Activated T-helper 2 cell treated with anti-CD3 and anti-CD28 coated beads, Interferon-gamma antibody, Interleukin-2, Interleukin-4, amounts not matched to agents 10 μg/mL and 5 μg/mL and 100 μg/mL, durations not matched to agents 14 hours and 24 hours and 36 hours (primary cell): ENCODE measurements at regions of chr9 and their contacts with region 1.

Region 1: DNA sequence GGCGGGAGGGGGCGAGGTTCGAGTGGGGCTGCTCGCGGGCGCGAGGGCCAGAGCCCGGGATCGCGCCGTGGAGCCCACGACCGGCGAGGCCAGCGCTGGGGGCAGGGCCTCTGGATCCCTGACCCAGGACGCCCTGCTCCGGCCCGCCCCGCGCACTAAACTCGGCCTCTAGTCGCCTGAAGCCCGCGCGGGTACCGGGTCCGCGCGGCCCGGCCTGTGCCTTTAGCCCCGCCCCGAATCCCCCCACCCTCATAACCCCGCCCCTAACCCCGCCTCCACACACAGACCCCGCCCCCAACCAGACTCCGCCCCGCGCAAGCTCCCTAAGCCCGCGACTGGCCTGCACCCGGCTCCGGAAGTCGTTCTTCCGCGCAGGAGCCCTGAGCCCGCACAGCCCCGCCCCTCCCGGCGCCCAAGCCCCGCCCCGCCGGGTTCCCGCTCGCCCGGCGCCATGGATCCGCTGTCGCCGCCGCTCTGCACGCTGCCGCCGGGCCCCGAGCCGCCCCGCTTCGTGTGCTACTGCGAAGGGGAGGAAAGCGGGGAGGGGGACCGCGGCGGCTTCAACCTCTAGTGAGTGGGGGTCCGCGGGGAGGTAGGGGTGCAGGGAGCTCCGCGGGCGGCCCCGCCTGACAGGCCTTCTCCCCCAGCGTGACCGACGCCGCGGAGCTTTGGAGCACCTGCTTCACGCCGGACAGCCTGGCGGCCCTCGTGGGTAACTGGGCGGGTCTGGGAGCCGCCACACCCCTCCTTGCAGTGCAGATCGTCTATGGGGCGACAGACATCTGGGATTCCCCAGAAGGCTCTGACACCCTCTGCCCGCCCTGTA is at the start of gene PAXX:
- DNase-seq: peak; percentile 93
- H3K4me3 Mint-ChIP-seq: peak within 1 kb of the TSS; percentile 83
- H3K27ac Mint-ChIP-seq: peak within 1 kb of the TSS; percentile 77
- H3K4me1 Mint-ChIP-seq: peaks cover 10% of the 10 kb centered on the region
- H3K27me3 Mint-ChIP-seq: peaks cover 17% of the 10 kb centered on the region
- total RNA-seq, gene PAXX: 60.5 and 72.6 TPM in 2 replicates

Region 2: DNA sequence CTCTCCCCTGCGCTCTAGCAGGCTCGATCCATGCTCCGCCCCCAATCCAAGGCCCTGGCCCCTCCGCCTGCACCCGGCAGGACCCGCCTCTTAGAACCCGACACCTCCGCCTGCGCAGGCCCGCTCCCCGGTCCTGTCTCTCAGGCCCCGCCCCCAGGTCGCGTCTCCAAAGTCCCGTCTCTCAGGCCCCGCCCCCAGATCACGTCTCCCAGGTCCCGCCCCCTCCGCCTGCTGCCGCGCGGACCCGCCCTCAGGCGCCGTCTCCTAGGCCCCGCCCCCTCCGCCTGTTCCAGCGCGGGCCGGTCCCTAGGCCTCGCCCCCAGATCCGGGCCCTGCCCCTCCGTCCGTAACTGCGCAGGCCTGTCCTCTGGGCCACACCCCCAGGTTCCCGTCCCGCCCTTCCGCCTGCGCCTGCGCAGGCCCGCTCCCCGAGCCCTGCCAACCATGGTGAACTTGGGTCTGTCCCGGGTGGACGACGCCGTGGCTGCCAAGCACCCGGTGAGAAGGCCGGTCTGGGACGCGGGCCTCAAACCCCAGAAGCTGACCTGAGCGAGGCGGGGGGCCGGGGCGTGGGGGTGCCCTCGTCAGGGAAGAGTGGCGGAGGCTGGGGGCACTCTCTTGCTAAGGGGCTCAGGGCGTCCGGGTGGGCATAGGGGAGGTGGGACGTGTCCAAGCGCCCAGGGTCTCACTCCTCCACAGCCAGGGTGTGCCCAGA is 201.1 kb before region 1 on chr9 and contains the start of gene TMEM141:
- intact Hi-C with region 1: loop called (anchors 1 kb)
- DNase-seq: peak; percentile 100
- H3K4me3 Mint-ChIP-seq: peak within 1 kb of the TSS; percentile 80
- H3K27ac Mint-ChIP-seq: peak within 1 kb of the TSS; percentile 80
- H3K4me1 Mint-ChIP-seq: peaks cover 23% of the 10 kb centered on the region
- H3K27me3 Mint-ChIP-seq: peaks cover 6% of the 10 kb centered on the region
- total RNA-seq, gene TMEM141: 34.4 and 34.7 TPM in 2 replicates

Region 3: DNA sequence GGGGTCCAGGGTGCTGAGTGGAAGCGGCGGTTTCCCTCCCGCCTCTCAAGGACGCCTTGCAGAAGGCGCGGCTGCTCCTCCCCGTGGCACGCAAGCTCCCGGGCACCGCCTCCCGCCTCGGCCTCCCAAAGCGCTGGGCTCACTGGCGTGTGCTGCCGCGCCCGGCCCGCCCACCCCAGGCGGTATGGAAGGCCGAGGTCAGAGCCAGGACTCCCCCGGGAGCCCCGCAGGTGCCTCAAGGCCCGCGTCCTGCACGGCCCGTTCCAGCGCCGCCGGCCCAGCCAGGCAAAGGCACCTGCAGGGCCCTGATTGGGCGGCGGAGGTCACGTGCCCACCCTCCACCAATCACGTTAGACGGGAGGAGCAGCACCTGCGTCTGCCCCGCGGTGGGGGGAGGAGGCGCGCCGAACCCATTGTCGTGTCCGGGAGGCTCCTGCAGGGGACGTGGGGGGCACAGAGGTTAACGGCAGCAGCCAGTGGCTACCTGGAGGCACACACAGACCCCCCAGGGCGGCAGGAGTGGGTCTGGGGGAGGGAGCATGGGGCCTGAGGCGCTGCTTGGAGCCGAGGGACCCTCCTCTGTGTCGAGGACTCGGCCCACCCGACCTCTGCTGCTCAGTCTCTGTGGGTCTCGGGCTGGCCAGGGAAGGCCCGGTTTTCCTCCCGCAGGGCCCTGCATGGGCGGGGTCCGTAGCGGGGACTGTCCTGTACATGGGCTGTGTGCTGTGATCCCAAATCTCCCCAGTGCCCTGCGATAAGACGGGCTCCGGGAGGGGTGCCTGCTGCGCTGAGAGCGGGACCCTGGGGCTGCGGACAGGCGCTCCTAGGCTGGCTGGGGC is 42.2 kb before region 1 on chr9:
- intact Hi-C with region 1: loop called (anchors 2 kb)
- DNase-seq: peak; percentile 94
- H3K4me3 Mint-ChIP-seq: peak overlapping the region; percentile 81
- H3K27ac Mint-ChIP-seq: peak overlapping the region; percentile 87
- H3K4me1 Mint-ChIP-seq: no peaks in the 10 kb centered on the region
- H3K27me3 Mint-ChIP-seq: no peaks in the 10 kb centered on the region

Region 4: GRCh38 chr9:137029058-137029936 is 37.1 kb after region 1 on chr9:
- intact Hi-C with region 1: loop called (anchors 5 kb)
- DNase-seq: peak; percentile 61
- H3K4me3 Mint-ChIP-seq: peak overlapping the region; percentile 73
- H3K27ac Mint-ChIP-seq: peak overlapping the region; percentile 47
- H3K4me1 Mint-ChIP-seq: peaks cover 28% of the 10 kb centered on the region
- H3K27me3 Mint-ChIP-seq: peaks cover 2% of the 10 kb centered on the region